Transverse colon (tissue), 4 donors: ENCODE measurements at regions of chr7 and their contacts with region 1.

Region 1: GRCh38 chr7:101815835-101816493 is 1.5 kb upstream of the CUX1 start:
- DNase-seq: peak; percentile 79
- H3K4me3 ChIP-seq: peak overlapping the region; percentile 48 to 80 (median 67)
- H3K27ac ChIP-seq: peak overlapping the region; percentile 85 to 88 (median 86)
- H3K4me1 ChIP-seq: peaks cover 7 to 34% (median 17%) of the 10 kb centered on the region in 4 donors
- H3K27me3 ChIP-seq: no peaks in the 10 kb centered on the region
- CTCF ChIP-seq: peak in 3 of 5 experiments; percentile 3 to 32 (median 21)
- EP300 ChIP-seq: no peak
- POLR2A ChIP-seq: no peak

Region 2: GRCh38 chr7:101169838-101170551 is 646.0 kb before region 1 on chr7:
- in situ Hi-C with region 1: no loop called
- intact Hi-C with region 1: no loop called
- DNase-seq: peak; percentile 79
- H3K4me3 ChIP-seq: no peak overlapping the region
- H3K27ac ChIP-seq: no peak overlapping the region
- H3K4me1 ChIP-seq: peaks cover 18 to 44% (median 43%) of the 10 kb centered on the region in 4 donors
- H3K27me3 ChIP-seq: peaks cover 98% of the 10 kb centered on the region
- CTCF ChIP-seq: peak; percentile 79 to 93 (median 88)
- EP300 ChIP-seq: no peak
- POLR2A ChIP-seq: no peak

Region 3: GRCh38 chr7:101688183-101688831 is 127.7 kb before region 1 on chr7:
- in situ Hi-C with region 1: loop called in 2 of 4 experiments (anchors 5 to 10 kb)
- intact Hi-C with region 1: no loop called
- DNase-seq: peak; percentile 84
- H3K4me3 ChIP-seq: peak overlapping the region in 2 of 4 donors; percentile 19 to 43
- H3K27ac ChIP-seq: no peak overlapping the region
- H3K4me1 ChIP-seq: peaks cover 2 to 27% (median 12%) of the 10 kb centered on the region in 4 donors
- H3K27me3 ChIP-seq: no peaks in the 10 kb centered on the region
- CTCF ChIP-seq: peak; percentile 93 to 98 (median 98)
- EP300 ChIP-seq: no peak
- POLR2A ChIP-seq: no peak

Region 4: GRCh38 chr7:101882595-101883564 is 66.9 kb after region 1 on chr7:
- in situ Hi-C with region 1: no loop called
- intact Hi-C with region 1: loop called (anchors 10 kb)
- DNase-seq: peak; percentile 85
- H3K4me3 ChIP-seq: no peak overlapping the region
- H3K27ac ChIP-seq: peak overlapping the region; percentile 87 to 90 (median 88)
- H3K4me1 ChIP-seq: peaks cover 53 to 82% (median 62%) of the 10 kb centered on the region in 4 donors
- H3K27me3 ChIP-seq: no peaks in the 10 kb centered on the region
- CTCF ChIP-seq: no peak
- EP300 ChIP-seq: peak; percentile 8
- POLR2A ChIP-seq: no peak

Region 5: DNA sequence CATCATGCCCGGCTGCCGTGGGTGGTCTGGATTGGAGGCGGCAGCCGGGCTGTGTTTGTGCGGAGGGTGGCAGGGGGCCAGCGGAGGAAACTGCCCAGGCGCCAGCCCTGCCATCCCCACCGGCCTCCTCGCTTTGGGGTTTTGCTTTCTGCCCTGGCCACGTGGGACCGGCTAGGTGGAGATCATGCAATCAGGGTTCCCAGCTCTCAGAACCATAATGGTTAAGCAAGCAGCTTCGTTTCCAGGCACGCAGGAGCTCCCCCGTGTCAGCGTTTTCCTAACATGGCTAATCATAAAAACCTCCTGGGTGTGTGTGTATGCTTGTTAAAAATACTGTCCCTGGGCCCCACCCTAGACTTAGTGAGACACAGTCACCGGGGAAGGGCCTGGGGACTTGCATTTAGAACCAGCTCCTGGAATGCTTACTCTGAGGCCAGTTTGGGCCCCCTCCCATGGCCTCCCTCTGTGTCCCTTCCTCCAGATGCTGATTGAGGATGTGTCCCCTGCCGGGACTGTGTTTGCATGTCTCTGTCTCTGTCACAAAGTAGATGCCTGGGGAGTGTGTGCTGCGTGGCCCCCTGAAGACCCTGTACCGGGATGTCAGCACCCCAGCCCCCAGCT is 120.8 kb after region 1 on chr7:
- in situ Hi-C with region 1: no loop called
- intact Hi-C with region 1: loop called (anchors 10 kb)
- DNase-seq: peak; percentile 71
- H3K4me3 ChIP-seq: peak overlapping the region in 3 of 4 donors; percentile 4 to 39 (median 17)
- H3K27ac ChIP-seq: peak overlapping the region; percentile 88 to 90 (median 90)
- H3K4me1 ChIP-seq: peaks cover 31 to 65% (median 52%) of the 10 kb centered on the region in 4 donors
- H3K27me3 ChIP-seq: no peaks in the 10 kb centered on the region
- CTCF ChIP-seq: no peak
- EP300 ChIP-seq: no peak
- POLR2A ChIP-seq: no peak

Region 6: GRCh38 chr7:102125127-102125561 is 309.2 kb after region 1 on chr7:
- in situ Hi-C with region 1: no loop called
- intact Hi-C with region 1: loop called (anchors 10 kb)
- DNase-seq: peak; percentile 29
- H3K4me3 ChIP-seq: no peak overlapping the region
- H3K27ac ChIP-seq: peak overlapping the region in 3 of 4 donors; percentile 48 to 60 (median 59)
- H3K4me1 ChIP-seq: peaks cover 0 to 23% (median 12%) of the 10 kb centered on the region in 4 donors
- H3K27me3 ChIP-seq: no peaks in the 10 kb centered on the region
- CTCF ChIP-seq: no peak
- EP300 ChIP-seq: no peak
- POLR2A ChIP-seq: no peak